Panc1 (cell line): ENCODE measurements at regions of chr19 and their contacts with region 1.

Region 1: DNA sequence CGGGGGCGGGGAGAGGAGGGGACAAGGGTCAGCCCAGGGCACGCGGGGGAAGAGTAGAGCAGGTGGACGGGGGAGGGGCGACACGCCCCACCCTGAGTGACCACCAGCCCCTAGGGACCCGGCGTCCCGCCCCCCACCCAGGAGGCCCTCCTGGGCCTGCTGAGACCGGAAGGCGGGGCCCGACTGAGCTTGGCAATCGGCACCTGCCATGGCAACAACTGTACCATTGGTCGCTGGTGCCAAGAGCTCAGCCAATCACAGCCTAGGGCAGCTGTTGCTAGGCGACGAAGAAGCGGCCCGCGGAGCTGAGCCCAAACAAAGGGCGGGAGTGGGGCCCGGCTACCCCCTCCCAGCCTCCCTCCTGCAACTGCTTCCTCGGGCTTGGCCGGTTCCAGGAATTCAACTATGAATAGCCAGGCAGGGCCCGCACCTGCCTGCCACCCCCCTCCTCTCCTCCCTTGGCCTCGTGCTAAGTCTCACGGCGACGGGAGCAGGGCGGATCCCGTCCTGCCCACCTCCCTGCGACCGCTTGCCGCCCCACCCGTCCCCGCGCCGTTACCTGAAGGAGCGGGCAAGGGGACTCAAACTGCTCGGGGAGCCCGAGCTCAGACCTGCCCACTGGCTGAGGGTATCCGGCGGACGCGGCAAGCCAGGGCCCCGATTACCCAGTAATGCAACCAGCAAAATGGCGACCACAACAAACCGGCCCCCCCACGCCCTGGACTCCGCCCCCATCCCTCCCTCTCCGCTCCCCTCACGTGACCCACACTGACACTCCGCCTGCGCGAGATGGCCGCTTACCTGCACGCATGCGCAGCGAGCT is at the start of gene DYRK1B:
- DNase-seq: peak; percentile 100
- ATAC-seq: peak; percentile 94
- H3K4me3 ChIP-seq: peak within 1 kb of the TSS; percentile 36 to 57
- H3K27ac ChIP-seq: peak within 1 kb of the TSS; percentile 76
- H3K4me1 ChIP-seq: peaks cover 26% of the 10 kb centered on the region
- H3K27me3 ChIP-seq: no peaks in the 10 kb centered on the region
- CTCF ChIP-seq: no peak
- total RNA-seq, gene DYRK1B: 322 TPM

Region 2: DNA sequence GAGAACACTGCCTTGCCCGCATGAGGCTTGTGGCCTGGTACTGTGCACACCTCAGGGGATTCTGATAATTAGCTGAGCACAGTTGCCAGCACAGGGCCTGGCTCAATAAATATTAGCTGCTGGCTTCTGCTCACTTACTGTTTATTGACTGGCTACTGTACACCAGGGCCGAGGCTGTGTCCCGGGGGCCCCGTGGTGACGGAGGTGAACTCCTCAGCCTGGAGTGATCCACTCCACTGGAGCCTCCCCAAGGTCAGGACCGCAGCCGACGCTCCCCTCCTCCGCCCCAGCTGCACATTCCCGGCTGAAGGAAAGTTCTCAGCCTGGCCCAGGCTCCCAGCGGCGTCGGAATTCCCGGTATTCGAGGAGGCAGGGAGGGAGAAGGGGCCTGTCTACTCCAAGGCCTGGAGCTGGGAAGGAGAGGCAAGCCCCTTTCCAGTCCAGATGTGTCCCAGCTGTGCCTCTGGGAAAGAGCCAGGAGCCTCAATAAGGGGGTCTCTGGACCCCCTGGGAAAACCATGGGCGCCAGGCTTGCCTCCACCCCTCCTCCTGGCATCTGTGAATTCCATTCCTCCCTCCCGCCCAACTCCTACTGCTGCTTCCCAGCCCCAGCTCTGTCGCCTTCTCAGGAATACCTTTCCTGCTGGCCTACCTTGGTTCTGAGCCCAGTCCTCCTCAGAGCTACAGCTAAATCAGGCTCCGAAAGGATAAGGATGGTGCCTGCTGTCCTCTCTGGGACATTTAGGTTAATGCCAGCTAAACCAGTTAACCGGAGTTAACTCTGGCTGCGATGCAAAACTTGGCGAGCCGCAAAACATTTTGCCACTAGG is 405.2 kb before region 1 on chr19:
- CTCF ChIA-PET with region 1: interaction called, 10 read pairs
- POLR2A ChIA-PET with region 1: interaction called, 8 read pairs
- in situ Hi-C with region 1: no loop called
- intact Hi-C with region 1: no loop called
- DNase-seq: peak; percentile 92
- ATAC-seq: peak; percentile 70
- H3K4me3 ChIP-seq: peak overlapping the region; percentile 0 to 17; a peak in 3 of 4 replicates
- H3K27ac ChIP-seq: peak overlapping the region; percentile 86
- H3K4me1 ChIP-seq: peaks cover 75% of the 10 kb centered on the region
- H3K27me3 ChIP-seq: no peaks in the 10 kb centered on the region
- CTCF ChIP-seq: no peak

Region 3: GRCh38 chr19:39759457-39760184 is 74.1 kb before region 1 on chr19:
- CTCF ChIA-PET with region 1: interaction called, 42 read pairs
- POLR2A ChIA-PET with region 1: interaction called, 10 read pairs
- in situ Hi-C with region 1: no loop called
- intact Hi-C with region 1: no loop called
- DNase-seq: no peak
- ATAC-seq: no peak
- H3K4me3 ChIP-seq: no peak overlapping the region
- H3K27ac ChIP-seq: no peak overlapping the region
- H3K4me1 ChIP-seq: no peaks in the 10 kb centered on the region
- H3K27me3 ChIP-seq: peaks cover 81% of the 10 kb centered on the region
- CTCF ChIP-seq: no peak

Region 4: GRCh38 chr19:39813264-39813993 is 20.2 kb before region 1 on chr19:
- CTCF ChIA-PET with region 1: interaction called, 8 read pairs
- POLR2A ChIA-PET with region 1: interaction called, 20 read pairs
- in situ Hi-C with region 1: no loop called
- intact Hi-C with region 1: no loop called
- DNase-seq: no peak
- ATAC-seq: peak; percentile 5; the same call in 1 of the 2 replicates
- H3K4me3 ChIP-seq: no peak overlapping the region
- H3K27ac ChIP-seq: no peak overlapping the region
- H3K4me1 ChIP-seq: no peaks in the 10 kb centered on the region
- H3K27me3 ChIP-seq: no peaks in the 10 kb centered on the region
- CTCF ChIP-seq: no peak

Region 5: GRCh38 chr19:39858541-39858940 is 24.9 kb after region 1 on chr19:
- CTCF ChIA-PET with region 1: interaction called, 3 read pairs
- POLR2A ChIA-PET with region 1: interaction called, 11 read pairs
- in situ Hi-C with region 1: no loop called
- intact Hi-C with region 1: no loop called
- DNase-seq: no peak
- ATAC-seq: peak; percentile 13; the same call in 1 of the 2 replicates
- H3K4me3 ChIP-seq: no peak overlapping the region
- H3K27ac ChIP-seq: no peak overlapping the region
- H3K4me1 ChIP-seq: peaks cover 4% of the 10 kb centered on the region
- H3K27me3 ChIP-seq: no peaks in the 10 kb centered on the region
- CTCF ChIP-seq: no peak

Region 6: DNA sequence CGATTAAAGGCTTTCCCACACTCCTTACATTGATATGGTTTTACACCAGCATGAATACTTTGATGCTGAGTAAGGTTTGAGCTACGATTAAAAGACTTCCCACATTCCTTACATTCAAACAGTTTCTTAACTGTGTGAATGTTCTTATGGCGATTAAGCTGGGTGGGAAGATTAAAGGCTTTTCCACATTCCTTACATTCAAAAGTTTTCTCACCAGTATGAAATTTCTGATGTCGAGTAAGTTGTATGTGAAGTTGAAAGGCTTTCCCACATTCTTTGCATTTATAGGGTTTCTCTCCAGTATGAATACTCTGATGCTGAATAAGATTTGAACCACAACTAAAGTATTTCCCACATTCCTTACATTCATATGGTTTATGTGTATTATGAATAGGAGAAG is 202.3 kb after region 1 on chr19:
- CTCF ChIA-PET with region 1: no interaction called
- POLR2A ChIA-PET with region 1: interaction called, 10 read pairs
- in situ Hi-C with region 1: no loop called
- intact Hi-C with region 1: no loop called
- DNase-seq: no peak
- ATAC-seq: no peak
- H3K4me3 ChIP-seq: no peak overlapping the region
- H3K27ac ChIP-seq: no peak overlapping the region
- H3K4me1 ChIP-seq: no peaks in the 10 kb centered on the region
- H3K27me3 ChIP-seq: no peaks in the 10 kb centered on the region
- CTCF ChIP-seq: peak; percentile 19; the same call in 1 of the 2 replicates

Region 7: DNA sequence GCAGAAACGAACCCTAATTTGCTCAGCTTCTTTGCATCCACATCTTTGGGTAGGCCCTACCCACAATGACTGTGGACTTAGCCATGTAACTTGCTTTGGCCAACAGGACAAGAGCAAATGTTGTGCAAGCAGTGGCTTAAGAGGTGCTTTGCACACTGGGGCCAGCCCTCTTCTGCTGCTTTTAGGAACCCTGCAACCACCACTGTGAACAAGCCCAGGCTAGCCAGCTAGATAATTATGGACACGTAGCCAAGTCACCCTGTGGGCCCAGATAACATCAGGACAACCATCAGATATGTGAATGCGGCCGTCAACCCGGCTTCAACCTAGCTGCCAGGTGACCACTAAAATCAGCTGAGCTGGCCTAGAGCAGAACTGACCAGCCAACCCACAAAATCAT is 497.4 kb after region 1 on chr19:
- CTCF ChIA-PET with region 1: no interaction called
- POLR2A ChIA-PET with region 1: no interaction called
- in situ Hi-C with region 1: no loop called
- intact Hi-C with region 1: no loop called
- DNase-seq: no peak
- ATAC-seq: no peak
- H3K4me3 ChIP-seq: no peak overlapping the region
- H3K27ac ChIP-seq: no peak overlapping the region
- H3K4me1 ChIP-seq: no peaks in the 10 kb centered on the region
- H3K27me3 ChIP-seq: no peaks in the 10 kb centered on the region
- CTCF ChIP-seq: no peak